IMR-90 (cell line): ENCODE measurements at regions of chr7 and their contacts with region 1.

Region 1: GRCh38 chr7:36967387-36967786 is 243.1 kb upstream of the AOAH start:
- DNase-seq: peak; percentile 62
- ATAC-seq: peak; percentile 98
- H3K4me3 ChIP-seq: no peak overlapping the region
- H3K27ac ChIP-seq: no peak overlapping the region
- H3K4me1 ChIP-seq: no peaks in the 10 kb centered on the region
- H3K27me3 ChIP-seq: no peaks in the 10 kb centered on the region; the same call in 1 of the 2 replicates
- CTCF ChIP-seq: peak; percentile 81
- POLR2A ChIP-seq: no peak
- RAD21 ChIP-seq: peak; percentile 75

Region 2: GRCh38 chr7:36487756-36488336 is 479.5 kb before region 1 on chr7:
- CTCF ChIA-PET with region 1: interaction called, 3 read pairs
- POLR2A ChIA-PET with region 1: no interaction called
- dilution Hi-C with region 1: no loop called
- in situ Hi-C with region 1: loop called (anchors 25 kb)
- intact Hi-C with region 1: loop called (anchors 2 kb)
- DNase-seq: peak; percentile 68
- ATAC-seq: peak; percentile 85
- H3K4me3 ChIP-seq: no peak overlapping the region
- H3K27ac ChIP-seq: no peak overlapping the region
- H3K4me1 ChIP-seq: no peaks in the 10 kb centered on the region
- H3K27me3 ChIP-seq: peaks cover 19% of the 10 kb centered on the region
- CTCF ChIP-seq: peak; percentile 88
- POLR2A ChIP-seq: no peak
- RAD21 ChIP-seq: peak; percentile 94

Region 3: DNA sequence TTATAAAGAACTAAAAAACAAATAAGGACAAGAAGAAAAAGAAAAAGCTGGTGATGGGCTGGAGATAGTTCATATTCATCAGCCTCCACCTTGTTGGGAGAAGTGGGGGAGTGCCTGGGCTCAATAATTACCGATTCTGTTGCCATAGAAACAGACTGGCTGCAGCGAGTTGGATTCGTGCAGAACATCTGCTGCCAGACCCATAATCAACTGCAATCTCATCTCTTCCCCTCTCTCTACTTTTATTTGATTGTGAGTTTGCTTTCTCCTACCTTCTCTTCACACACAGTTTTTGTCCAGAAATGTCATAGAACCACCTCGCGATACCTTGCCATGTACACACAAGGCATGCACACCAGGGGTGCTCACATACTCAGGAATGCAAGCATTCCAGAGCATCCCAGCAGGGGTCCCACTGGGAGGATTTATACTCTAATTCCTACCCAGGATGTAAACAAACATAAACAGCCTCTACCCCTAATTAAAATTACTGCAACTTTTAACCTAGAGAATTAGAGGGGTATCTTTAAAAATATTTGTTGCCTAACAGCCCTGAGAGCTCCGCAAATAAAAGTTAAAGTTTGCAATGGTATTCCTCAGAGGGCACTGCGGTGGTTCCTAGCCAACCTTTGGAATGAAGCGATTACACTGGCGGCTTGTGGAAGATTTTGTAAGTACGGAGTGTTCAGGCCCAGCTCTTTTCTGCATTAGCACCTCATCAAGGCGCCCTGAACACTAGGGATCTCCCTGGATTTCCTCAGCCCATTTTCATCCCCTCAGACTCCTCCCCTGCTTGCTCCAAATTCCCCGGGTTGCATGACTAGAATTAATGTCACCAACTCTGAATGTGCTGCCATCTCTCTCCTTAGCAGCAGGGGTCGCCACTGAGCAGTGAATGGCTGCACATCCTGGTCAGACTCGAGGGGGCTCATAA is 19.3 kb after region 1 on chr7:
- CTCF ChIA-PET with region 1: interaction called, 20 read pairs
- POLR2A ChIA-PET with region 1: no interaction called
- dilution Hi-C with region 1: no loop called
- in situ Hi-C with region 1: no loop called
- intact Hi-C with region 1: no loop called
- DNase-seq: peak; percentile 42
- ATAC-seq: peak; percentile 94
- H3K4me3 ChIP-seq: no peak overlapping the region
- H3K27ac ChIP-seq: no peak overlapping the region
- H3K4me1 ChIP-seq: no peaks in the 10 kb centered on the region
- H3K27me3 ChIP-seq: peaks cover 15% of the 10 kb centered on the region
- CTCF ChIP-seq: peak; percentile 88
- POLR2A ChIP-seq: no peak
- RAD21 ChIP-seq: peak; percentile 81

Region 4: DNA sequence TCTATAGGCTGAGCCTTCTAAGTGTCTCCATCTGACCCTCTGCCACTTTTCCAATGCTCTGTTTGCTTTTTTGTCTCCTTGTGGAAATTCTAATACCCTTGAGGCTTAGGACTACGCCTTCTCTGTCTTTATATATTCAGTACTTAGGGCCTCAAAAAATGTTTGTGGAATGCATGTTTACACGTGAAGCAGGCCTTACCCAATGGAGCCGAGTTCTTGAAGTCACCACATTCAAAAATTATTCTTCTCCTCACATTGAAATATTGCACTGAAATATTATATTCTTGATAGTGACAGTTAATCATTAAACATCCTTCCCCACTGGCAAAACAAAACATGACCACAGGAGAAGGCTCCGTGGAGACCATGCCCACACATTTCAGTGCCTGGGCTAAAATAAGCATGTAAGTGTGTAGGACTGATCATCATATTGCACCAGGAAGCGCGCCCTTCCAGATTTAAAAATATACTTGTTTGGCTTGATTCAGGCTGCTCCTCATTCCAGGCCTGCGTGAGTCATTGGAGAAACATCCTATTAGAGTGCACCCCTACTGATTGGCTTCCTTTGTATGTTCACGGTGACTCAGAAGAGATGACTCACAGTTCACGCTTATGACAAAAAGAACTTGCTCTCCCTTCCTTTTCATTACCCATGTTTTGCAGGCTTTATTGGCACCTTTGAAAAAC is 64.3 kb after region 1 on chr7:
- CTCF ChIA-PET with region 1: no interaction called
- POLR2A ChIA-PET with region 1: no interaction called
- dilution Hi-C with region 1: no loop called
- in situ Hi-C with region 1: no loop called
- intact Hi-C with region 1: loop called (anchors 5 kb)
- DNase-seq: peak; percentile 100
- ATAC-seq: peak; percentile 95
- H3K4me3 ChIP-seq: no peak overlapping the region
- H3K27ac ChIP-seq: peak overlapping the region; percentile 60
- H3K4me1 ChIP-seq: peaks cover 13% of the 10 kb centered on the region
- H3K27me3 ChIP-seq: no peaks in the 10 kb centered on the region
- CTCF ChIP-seq: no peak
- POLR2A ChIP-seq: no peak
- RAD21 ChIP-seq: no peak

Region 5: DNA sequence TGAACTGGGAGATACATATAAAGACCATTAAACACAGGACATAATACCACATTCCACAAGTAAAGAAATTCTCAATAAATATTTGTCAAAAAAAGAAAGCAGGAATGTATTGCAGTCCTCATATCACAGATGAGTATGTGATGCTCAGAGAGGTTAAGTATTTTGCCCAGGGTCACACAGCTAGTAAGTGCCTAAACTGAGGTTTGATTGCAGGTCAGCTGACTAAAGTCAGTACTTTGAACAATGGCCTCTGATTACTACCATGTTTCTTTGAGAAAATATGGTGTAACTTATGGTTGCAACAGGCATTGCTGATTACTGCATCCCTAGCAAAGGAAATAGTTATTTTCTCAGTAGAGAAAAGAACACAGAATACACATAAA is 214.2 kb after region 1 on chr7:
- CTCF ChIA-PET with region 1: interaction called, 104 read pairs
- POLR2A ChIA-PET with region 1: no interaction called
- dilution Hi-C with region 1: no loop called
- in situ Hi-C with region 1: no loop called
- intact Hi-C with region 1: loop called (anchors 1 kb)
- DNase-seq: no peak
- ATAC-seq: peak; percentile 22
- H3K4me3 ChIP-seq: no peak overlapping the region
- H3K27ac ChIP-seq: no peak overlapping the region
- H3K4me1 ChIP-seq: no peaks in the 10 kb centered on the region
- H3K27me3 ChIP-seq: peaks cover 2% of the 10 kb centered on the region; the same call in 1 of the 2 replicates
- CTCF ChIP-seq: no peak
- POLR2A ChIP-seq: no peak
- RAD21 ChIP-seq: no peak